ENCODE measurements at regions of chr3 and their contacts with region 1.

Region 1: GRCh38 chr3:17742108-17742879 is at the start of gene TBC1D5:
- DNase-seq: peak; percentile 97
- ATAC-seq: peak; percentile 85
- H3K4me3 ChIP-seq: peak within 1 kb of the TSS; percentile 81 to 84 (median 83)
- H3K4me3 Mint-ChIP-seq: peak within 1 kb of the TSS; percentile 96
- H3K27ac ChIP-seq: peak within 1 kb of the TSS; percentile 89 to 93
- H3K27ac Mint-ChIP-seq: peak within 1 kb of the TSS; percentile 98
- H3K4me1 ChIP-seq: peaks cover 43 to 49% of the 10 kb centered on the region in 2 donors
- H3K4me1 Mint-ChIP-seq: peaks cover 65% of the 10 kb centered on the region
- H3K27me3 ChIP-seq: no peaks in the 10 kb centered on the region
- H3K27me3 Mint-ChIP-seq: no peaks in the 10 kb centered on the region
- CTCF ChIP-seq: no peak
- total RNA-seq, gene TBC1D5: 111 and 112 TPM in 2 replicates

Region 2: GRCh38 chr3:17717411-17717810 is 24.9 kb before region 1 on chr3:
- CTCF ChIA-PET with region 1: no interaction called
- POLR2A ChIA-PET with region 1: no interaction called
- intact Hi-C with region 1: no loop called
- DNase-seq: no peak
- ATAC-seq: no peak
- H3K4me3 ChIP-seq: no peak overlapping the region
- H3K4me3 Mint-ChIP-seq: no peak overlapping the region
- H3K27ac ChIP-seq: no peak overlapping the region
- H3K27ac Mint-ChIP-seq: no peak overlapping the region
- H3K4me1 ChIP-seq: no peaks in the 10 kb centered on the region
- H3K4me1 Mint-ChIP-seq: peaks cover 15% of the 10 kb centered on the region
- H3K27me3 ChIP-seq: no peaks in the 10 kb centered on the region
- H3K27me3 Mint-ChIP-seq: no peaks in the 10 kb centered on the region
- CTCF ChIP-seq: no peak

Region 3: DNA sequence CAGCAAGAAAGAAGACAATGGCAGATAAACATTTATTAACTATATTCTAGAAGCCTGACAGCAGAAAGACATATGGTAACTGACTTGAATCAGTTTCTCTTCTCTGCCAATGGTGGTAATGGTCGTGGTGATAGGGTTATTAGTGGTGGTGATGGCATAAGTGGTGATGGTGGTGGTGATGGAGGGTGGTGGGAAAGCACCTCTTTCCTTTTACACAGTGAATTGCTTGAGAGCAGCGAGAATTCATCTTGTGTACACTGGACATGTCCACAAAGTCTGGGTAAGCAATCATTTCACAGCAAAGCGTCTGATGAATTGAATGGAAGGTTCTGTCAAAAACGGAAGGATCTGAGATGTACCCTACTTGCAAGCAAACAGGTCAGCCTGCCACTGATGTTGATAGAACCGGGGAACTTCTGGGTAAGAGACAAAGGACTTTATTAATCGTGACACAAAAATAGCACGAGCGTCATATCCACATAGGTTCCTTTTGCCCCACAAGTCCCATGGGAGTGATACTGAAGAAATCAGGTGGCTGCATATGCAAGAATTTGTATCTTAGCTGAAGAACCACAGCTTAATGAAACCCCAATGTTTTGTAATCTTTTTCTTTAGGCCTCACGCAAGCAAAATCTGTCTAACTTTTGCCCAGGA is 23.7 kb after region 1 on chr3:
- CTCF ChIA-PET with region 1: interaction called, 4 read pairs
- POLR2A ChIA-PET with region 1: interaction called, 7 read pairs
- intact Hi-C with region 1: loop called (anchors 2 kb)
- DNase-seq: peak; percentile 68
- ATAC-seq: peak; percentile 89
- H3K4me3 ChIP-seq: no peak overlapping the region
- H3K4me3 Mint-ChIP-seq: peak overlapping the region; percentile 28
- H3K27ac ChIP-seq: peak overlapping the region in 1 of 2 donors; percentile 29
- H3K27ac Mint-ChIP-seq: peak overlapping the region; percentile 11
- H3K4me1 ChIP-seq: peaks cover 10 to 11% of the 10 kb centered on the region in 2 donors
- H3K4me1 Mint-ChIP-seq: peaks cover 21% of the 10 kb centered on the region
- H3K27me3 ChIP-seq: no peaks in the 10 kb centered on the region
- H3K27me3 Mint-ChIP-seq: no peaks in the 10 kb centered on the region
- CTCF ChIP-seq: no peak